ENCODE measurements at regions of chr1 and their contacts with region 1.

Region 1: DNA sequence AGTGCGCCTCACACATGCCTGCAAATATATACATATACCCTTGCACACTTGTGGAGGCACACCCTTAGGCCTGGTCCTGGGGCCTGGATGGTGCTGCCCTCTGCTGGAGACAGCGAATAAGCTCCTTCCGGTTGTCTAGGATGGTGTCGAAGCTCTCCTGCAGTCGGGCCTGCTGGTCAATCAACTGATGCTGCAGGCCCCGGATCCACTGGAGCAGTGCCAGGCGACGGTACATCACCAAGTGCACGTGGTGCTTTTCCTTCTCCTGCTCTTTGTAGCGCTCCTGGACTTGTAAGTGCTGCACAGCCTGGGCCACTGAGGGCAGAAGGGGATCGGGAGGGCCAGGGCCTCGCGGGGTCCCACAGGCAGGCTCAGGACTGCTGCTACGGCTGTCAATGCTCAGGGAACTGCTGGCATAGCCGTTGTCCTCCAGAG is 3.1 kb downstream of the C1orf216 start:
- DNase-seq: peak; percentile 90
- H3K4me3 ChIP-seq: peak overlapping the region; percentile 10 to 46; a peak in 1 of 4 replicates
- H3K27ac ChIP-seq: peak overlapping the region in 1 of 2 experiments; percentile 40; a peak in 2 of 4 replicates
- H3K4me1 ChIP-seq: peaks cover 0 to 24% of the 10 kb centered on the region in 2 experiments; a peak in 2 of 4 replicates
- H3K27me3 ChIP-seq: no peaks in the 10 kb centered on the region
- CTCF ChIP-seq: peak; percentile 93
- EP300 ChIP-seq: no peak
- RAD21 ChIP-seq: peak; percentile 80

Region 2: DNA sequence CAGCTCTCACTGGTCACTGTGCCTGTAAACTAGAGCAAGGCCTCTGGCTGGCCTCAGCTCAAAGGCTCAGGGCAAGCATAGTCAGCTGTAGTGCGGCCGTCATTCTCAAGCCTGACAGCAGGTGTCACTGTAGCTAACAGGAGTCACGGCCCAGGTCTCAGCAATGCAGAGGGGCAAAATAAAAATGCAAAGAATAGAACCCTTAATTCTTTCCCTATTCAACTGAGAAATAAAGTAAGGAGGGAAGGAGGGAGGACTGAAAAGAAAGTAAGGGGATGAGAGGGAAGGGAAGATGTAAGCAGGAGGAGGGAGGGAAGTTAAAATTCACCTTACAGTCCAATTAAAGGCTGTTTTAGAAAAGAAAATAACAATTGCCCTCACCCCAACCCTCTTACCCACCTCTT is 264.5 kb before region 1 on chr1:
- CTCF ChIA-PET with region 1: interaction called, 15 read pairs
- POLR2A ChIA-PET with region 1: interaction called, 3 read pairs
- DNase-seq: peak; percentile 68
- H3K4me3 ChIP-seq: 0 out of 4 replicates have a peak overlapping the region, but pooled peaks of 1 of the 2 experiments have one; percentile 33
- H3K27ac ChIP-seq: peak overlapping the region in 1 of 2 experiments; percentile 61; a peak in 1 of 4 replicates
- H3K4me1 ChIP-seq: peaks cover 15 to 32% of the 10 kb centered on the region in 2 experiments
- H3K27me3 ChIP-seq: no peaks in the 10 kb centered on the region
- CTCF ChIP-seq: peak; percentile 89
- EP300 ChIP-seq: no peak
- RAD21 ChIP-seq: peak; percentile 84

Region 3: GRCh38 chr1:35569936-35570335 is 145.6 kb before region 1 on chr1:
- CTCF ChIA-PET with region 1: interaction called, 347 read pairs
- POLR2A ChIA-PET with region 1: interaction called, 7 read pairs
- DNase-seq: no peak
- H3K4me3 ChIP-seq: no peak overlapping the region
- H3K27ac ChIP-seq: peak overlapping the region in 1 of 2 experiments; percentile 11; a peak in 1 of 4 replicates
- H3K4me1 ChIP-seq: peaks cover 0 to 7% of the 10 kb centered on the region in 2 experiments; a peak in 1 of 4 replicates
- H3K27me3 ChIP-seq: no peaks in the 10 kb centered on the region
- CTCF ChIP-seq: no peak
- EP300 ChIP-seq: no peak
- RAD21 ChIP-seq: no peak

Region 4: DNA sequence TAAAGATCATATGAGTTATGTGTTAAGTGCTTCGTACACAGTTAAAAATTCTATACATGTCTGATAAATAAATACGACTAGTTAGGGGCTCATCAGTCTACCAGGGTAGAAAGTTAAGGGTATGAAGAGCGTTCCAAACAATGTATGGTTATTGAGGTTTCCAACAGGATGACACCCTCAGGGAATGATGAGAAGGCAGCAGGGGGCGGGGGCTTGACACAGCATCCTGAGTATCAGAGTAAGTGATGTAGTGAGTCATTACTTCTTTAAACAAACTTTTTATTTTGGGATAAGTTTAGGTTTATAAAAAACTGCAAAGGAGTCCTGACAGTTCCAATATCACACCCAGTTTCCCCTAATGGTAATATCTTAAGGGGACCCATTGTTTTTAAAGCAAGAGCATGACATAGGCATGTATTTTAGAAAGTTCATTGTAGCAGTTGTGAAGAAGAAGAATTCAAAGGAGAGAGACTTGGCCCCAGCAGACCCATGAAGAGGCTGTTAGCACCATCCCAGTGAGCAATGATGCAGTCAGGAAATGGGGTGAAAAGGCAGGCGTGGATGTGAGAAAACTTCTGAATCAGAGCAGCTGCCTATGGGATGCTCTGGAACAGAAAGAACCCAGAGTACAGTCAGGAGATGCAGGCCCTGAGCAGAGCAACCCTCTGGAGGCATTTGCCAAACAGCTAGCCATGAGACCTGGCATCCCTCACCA is 59.3 kb before region 1 on chr1:
- CTCF ChIA-PET with region 1: interaction called, 12 read pairs
- POLR2A ChIA-PET with region 1: no interaction called
- DNase-seq: no peak
- H3K4me3 ChIP-seq: no peak overlapping the region
- H3K27ac ChIP-seq: no peak overlapping the region
- H3K4me1 ChIP-seq: peaks cover 0 to 4% of the 10 kb centered on the region in 2 experiments; a peak in 1 of 4 replicates
- H3K27me3 ChIP-seq: no peaks in the 10 kb centered on the region
- CTCF ChIP-seq: no peak
- EP300 ChIP-seq: no peak
- RAD21 ChIP-seq: no peak

Region 5: DNA sequence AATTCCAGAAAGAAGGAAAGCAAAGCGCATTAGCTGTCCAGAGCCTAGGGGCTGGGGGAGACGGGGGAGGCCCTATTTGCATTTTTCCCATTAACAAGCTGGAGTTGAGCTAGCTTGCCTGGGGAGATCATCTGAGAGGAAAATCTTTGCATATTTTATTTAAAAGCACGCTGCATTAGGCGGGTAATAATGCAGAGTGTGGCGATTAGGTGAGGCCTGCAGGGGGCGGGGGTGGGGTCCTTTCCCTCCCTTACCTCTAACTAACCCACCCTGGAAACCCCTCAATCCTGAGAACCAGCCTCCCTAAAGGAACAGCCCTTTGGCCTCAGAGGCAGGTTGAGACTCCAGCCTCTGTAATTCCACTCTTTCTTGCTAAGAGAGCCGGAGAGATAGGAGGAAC is 13.1 kb before region 1 on chr1:
- CTCF ChIA-PET with region 1: interaction called, 27 read pairs
- POLR2A ChIA-PET with region 1: interaction called, 3 read pairs
- DNase-seq: no peak
- H3K4me3 ChIP-seq: no peak overlapping the region
- H3K27ac ChIP-seq: no peak overlapping the region
- H3K4me1 ChIP-seq: peaks cover 0 to 3% of the 10 kb centered on the region in 2 experiments; a peak in 1 of 4 replicates
- H3K27me3 ChIP-seq: no peaks in the 10 kb centered on the region; the same call in 1 of the 2 replicates
- CTCF ChIP-seq: no peak
- EP300 ChIP-seq: no peak
- RAD21 ChIP-seq: no peak